PC-3 (cell line): ENCODE measurements at regions of chr18 and their contacts with region 1.

Region 1: DNA sequence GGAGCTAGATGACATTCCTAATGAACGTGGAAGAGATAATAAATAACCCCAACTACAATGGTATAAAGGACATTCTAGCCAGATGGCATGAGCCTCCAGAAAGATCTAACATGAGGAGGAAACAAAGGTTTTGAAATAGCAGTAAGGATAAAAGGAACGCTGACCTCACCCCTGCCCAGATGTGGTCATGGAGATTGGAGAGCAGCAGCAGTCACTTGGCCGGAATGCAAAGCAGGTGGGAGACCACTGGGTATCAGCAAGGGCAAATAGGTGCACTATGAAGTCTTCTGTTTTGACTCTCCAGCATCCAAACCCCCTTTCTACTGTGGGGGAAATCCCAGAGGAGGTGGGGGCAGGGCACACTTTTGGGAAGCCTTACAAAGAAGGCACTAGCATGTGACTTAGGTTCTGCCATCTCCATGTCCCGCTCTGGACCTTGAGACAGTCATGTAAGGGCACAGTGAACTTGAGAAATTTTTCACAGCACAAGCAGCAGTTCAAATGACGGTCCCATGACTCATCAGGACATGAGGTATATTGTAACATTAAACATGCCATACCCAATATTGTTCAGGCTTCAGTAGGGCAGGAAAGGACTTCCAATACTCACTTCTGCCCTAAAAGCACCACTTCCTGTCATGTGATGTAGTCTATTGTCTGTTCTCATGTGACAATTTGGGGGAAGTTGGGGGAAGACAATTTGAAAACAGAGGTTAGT is 55.2 kb downstream of the METTL4 start:
- DNase-seq: peak; percentile 98
- ATAC-seq: peak; percentile 92
- H3K4me3 ChIP-seq: peak overlapping the region; percentile 20
- H3K27ac ChIP-seq: peak overlapping the region; percentile 95
- H3K4me1 ChIP-seq: peaks cover 36% of the 10 kb centered on the region
- H3K27me3 ChIP-seq: no peaks in the 10 kb centered on the region
- CTCF ChIP-seq: no peak

Region 2: GRCh38 chr18:2411381-2411960 is 104.6 kb before region 1 on chr18:
- CTCF ChIA-PET with region 1: no interaction called
- POLR2A ChIA-PET with region 1: no interaction called
- intact Hi-C with region 1: loop called (anchors 1 kb)
- DNase-seq: peak; percentile 89
- ATAC-seq: peak; percentile 89
- H3K4me3 ChIP-seq: peak overlapping the region; percentile 38; the same call in 1 of the 2 replicates
- H3K27ac ChIP-seq: peak overlapping the region; percentile 91
- H3K4me1 ChIP-seq: peaks cover 43% of the 10 kb centered on the region
- H3K27me3 ChIP-seq: no peaks in the 10 kb centered on the region
- CTCF ChIP-seq: no peak

Region 3: DNA sequence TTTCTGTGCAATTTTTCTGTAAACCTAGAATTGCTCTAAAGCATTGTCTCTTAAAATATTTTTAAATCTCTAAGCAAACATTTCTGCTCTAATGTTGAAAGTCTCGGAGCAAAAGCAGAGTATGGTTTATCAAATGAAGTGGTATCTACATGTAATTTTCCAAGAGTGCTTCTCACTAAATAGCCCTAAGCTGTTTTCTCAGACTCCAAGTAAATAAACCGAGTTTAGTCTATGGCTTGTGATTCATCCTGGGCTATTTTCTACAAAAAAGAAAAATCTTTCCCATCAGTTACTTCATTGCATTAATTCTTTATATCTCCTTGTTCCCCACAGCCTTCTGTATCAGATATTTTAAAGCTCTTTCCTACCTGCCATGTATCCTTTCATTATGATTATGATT is 35.5 kb before region 1 on chr18:
- CTCF ChIA-PET with region 1: no interaction called
- POLR2A ChIA-PET with region 1: no interaction called
- intact Hi-C with region 1: loop called (anchors 5 kb)
- DNase-seq: peak; percentile 68
- ATAC-seq: peak; percentile 98
- H3K4me3 ChIP-seq: no peak overlapping the region
- H3K27ac ChIP-seq: peak overlapping the region; percentile 27; the same call in 1 of the 2 replicates
- H3K4me1 ChIP-seq: peaks cover 12% of the 10 kb centered on the region
- H3K27me3 ChIP-seq: no peaks in the 10 kb centered on the region
- CTCF ChIP-seq: no peak